Right ventricle myocardium inferior (tissue), 1 donor: ENCODE measurements at regions of chr6 and their contacts with region 1.

Region 1: DNA sequence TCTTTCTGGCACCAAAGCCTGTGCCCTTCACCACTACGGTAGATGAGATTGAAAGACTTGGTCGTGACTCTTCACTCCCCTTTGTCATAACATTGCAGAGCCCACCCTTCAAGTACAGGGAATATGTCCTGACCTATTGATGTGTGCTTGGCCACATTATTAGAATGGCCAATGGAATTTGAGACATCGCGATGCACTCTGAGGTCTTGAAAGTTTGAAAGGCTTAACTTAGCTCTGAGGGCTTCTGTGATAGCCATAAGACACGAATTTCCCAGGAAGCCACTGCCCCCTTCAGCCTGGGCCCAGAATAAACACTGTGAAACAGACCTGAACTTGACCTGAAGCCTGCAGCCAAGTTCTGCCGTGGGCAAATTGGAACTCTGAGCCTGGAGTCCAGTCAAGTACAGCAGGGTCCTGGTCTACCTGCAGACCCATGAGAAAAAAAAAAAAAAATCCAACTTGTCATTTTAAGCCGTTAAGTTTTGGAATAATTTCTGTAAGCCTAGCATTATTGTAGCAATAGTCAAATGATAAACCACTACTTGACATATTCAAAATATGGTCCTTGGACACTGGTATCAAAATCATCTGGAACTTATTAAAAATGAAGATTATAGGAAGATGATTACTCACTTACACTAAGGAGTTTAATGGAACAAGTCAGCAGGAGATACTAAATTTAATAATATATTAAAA is 36.9 kb upstream of the TRAF3IP2 start:
- DNase-seq: no peak
- ATAC-seq: peak; percentile 87

Region 2: DNA sequence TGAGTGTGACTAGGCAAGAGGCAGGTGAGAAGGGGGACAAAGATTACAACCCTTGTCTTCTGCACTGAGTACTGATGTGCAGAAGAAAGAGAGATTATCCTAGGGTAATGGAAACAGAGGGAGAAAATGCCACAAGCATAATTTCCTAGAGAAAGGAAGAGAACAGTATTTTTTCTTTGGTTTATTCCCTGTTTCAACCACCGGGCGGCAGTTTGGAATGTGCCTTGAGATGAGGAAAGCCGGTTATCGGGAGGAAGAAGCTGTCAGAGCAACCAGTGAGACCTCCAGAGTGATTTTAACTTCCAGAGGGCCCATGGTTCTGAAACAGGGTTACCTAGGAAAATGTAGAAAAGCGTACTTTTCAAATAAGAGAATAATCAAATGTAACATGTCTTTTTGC is 281.0 kb before region 1 on chr6:
- intact Hi-C with region 1: loop called (anchors 10 kb)
- DNase-seq: no peak
- ATAC-seq: no peak

Region 3: DNA sequence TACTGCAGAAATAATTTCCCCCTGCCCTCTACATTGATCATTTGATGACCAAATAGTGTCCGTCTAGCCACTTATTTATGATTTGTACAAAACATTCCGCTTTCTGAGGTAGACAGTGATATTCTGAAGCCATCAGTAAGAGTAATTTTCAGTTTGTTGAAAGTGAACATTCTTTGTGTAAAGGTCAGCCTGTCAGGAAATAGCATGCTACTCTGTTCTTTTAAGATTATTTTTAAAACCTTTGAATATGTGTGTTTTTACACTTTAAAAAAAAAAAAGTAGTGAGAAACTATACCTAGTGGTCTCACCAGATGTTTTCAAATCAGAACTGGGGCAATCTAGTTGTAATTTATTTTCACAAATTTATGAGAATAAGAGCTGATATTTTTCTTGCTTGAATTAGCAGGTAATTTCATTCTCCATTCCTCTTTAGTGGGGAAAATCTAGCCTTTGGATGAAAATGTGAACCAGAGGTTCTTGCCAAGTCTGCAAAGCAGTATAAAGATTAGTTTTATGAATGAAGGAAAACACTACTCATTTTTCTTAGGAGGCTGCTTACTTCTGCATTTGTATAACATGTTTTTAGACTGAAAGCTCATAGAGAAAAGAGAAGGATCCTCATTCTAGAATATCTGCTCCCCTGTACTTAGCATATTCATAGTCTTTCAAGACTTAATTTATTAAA is 147.5 kb before region 1 on chr6:
- intact Hi-C with region 1: no loop called
- DNase-seq: no peak
- ATAC-seq: no peak

Region 4: GRCh38 chr6:111597687-111598086 is 44.9 kb before region 1 on chr6:
- intact Hi-C with region 1: no loop called
- DNase-seq: no peak
- ATAC-seq: no peak

Region 5: GRCh38 chr6:111774346-111774703 is 131.7 kb after region 1 on chr6:
- intact Hi-C with region 1: no loop called
- DNase-seq: no peak
- ATAC-seq: peak; percentile 23